Activated T-helper 1 cell treated with anti-CD3 and anti-CD28 coated beads, Interleukin-12 subunit alpha, Interleukin-12 subunit beta, Interleukin-2, Interleukin-4 antibody, amounts not matched to agents 30 ng/mL and 10 ng/mL and 1 ng/mL, durations not matched to agents 14 hours and 24 hours and 36 hours (primary cell): ENCODE measurements at regions of chr11 and their contacts with region 1.

Region 1: GRCh38 chr11:17991783-17992433 is 20.9 kb downstream of the SERGEF start:
- DNase-seq: peak; percentile 33
- H3K4me3 Mint-ChIP-seq: no peak overlapping the region
- H3K27ac Mint-ChIP-seq: no peak overlapping the region
- H3K4me1 Mint-ChIP-seq: no peaks in the 10 kb centered on the region
- H3K27me3 Mint-ChIP-seq: no peaks in the 10 kb centered on the region

Region 2: DNA sequence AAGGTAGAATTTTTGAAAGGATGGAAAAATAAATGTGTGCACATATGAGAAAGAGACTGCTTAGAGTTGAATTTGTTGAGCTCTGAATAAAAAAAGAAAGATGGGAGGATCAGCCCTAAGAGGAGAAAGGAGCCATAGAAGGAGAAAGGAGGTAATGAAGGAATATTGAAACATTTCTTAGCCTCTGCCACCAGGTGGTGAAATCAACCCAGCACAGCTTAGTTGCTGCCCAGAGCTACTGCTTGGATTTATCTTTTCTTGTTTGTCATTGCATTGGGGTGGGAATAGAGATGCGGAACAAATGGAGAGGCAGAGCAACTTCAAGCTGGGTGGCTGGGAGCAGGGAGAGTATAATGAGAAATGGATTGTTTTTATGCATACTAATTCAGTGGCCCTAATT is 59.4 kb before region 1 on chr11:
- intact Hi-C with region 1: no loop called
- DNase-seq: no peak
- H3K4me3 Mint-ChIP-seq: no peak overlapping the region
- H3K27ac Mint-ChIP-seq: no peak overlapping the region
- H3K4me1 Mint-ChIP-seq: no peaks in the 10 kb centered on the region
- H3K27me3 Mint-ChIP-seq: no peaks in the 10 kb centered on the region

Region 3: GRCh38 chr11:18203723-18204122 is 211.8 kb after region 1 on chr11:
- intact Hi-C with region 1: loop called (anchors 10 kb)
- DNase-seq: no peak
- H3K4me3 Mint-ChIP-seq: no peak overlapping the region
- H3K27ac Mint-ChIP-seq: no peak overlapping the region
- H3K4me1 Mint-ChIP-seq: peaks cover 6% of the 10 kb centered on the region
- H3K27me3 Mint-ChIP-seq: peaks cover 41% of the 10 kb centered on the region